BJ (cell line): ENCODE measurements at regions of chr4 and their contacts with region 1.

Region 1: DNA sequence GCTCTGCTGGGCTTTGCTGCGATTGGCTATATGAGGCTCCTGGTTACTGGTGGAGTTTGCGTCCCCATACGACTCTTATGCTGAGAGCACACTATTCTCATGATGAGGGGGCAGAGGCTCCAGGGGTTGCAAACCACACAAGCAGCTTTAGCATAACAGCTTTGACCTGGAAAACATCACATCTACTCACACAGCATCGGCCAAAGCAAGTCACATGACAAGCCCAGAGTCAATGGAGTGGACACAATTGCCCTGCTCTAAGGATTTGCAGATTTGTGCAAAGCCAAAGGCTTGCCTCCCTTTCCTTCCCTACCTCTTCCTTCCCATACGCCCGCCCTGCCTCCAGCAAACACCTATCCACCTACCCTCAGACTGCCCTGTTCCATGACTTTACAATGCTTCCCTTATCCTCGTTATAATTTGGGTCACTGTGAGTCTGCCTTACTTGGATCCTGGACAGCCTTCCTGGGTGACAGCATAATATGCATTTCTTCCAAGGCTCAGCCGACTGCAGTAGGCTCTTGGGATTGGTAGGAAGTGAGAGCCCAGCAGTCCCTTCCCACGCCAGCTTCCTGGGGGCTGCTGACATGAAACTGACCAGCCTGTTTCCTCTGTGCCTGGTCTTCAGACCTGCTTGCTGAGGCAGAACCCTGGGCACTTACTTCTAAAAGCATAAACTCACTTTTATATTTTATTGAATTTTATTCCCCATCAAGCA is 208.2 kb upstream of the PSAPL1 start:
- DNase-seq: no peak
- H3K4me3 ChIP-seq: no peak overlapping the region
- H3K27me3 ChIP-seq: peaks cover 2% of the 10 kb centered on the region; the same call in 1 of the 2 replicates
- CTCF ChIP-seq: no peak

Region 2: GRCh38 chr4:7630568-7631287 is 12.2 kb before region 1 on chr4:
- CTCF ChIA-PET with region 1: interaction called, 3 read pairs
- POLR2A ChIA-PET with region 1: interaction called, 11 read pairs
- DNase-seq: peak; percentile 47
- H3K4me3 ChIP-seq: no peak overlapping the region
- H3K27me3 ChIP-seq: no peaks in the 10 kb centered on the region; the same call in 1 of the 2 replicates
- CTCF ChIP-seq: no peak